ENCODE measurements at regions of chr12 and their contacts with region 1.

Region 1: GRCh38 chr12:121697098-121697698 is 15.4 kb upstream of the TMEM120B start:
- DNase-seq: no peak
- ATAC-seq: peak in 3 of 4 donors; percentile 19 to 54 (median 30)
- H3K4me3 ChIP-seq: no peak overlapping the region
- H3K27ac ChIP-seq: no peak overlapping the region
- H3K4me1 ChIP-seq: peaks cover 8% of the 10 kb centered on the region
- H3K27me3 ChIP-seq: no peaks in the 10 kb centered on the region
- CTCF ChIP-seq: peak; percentile 70

Region 2: DNA sequence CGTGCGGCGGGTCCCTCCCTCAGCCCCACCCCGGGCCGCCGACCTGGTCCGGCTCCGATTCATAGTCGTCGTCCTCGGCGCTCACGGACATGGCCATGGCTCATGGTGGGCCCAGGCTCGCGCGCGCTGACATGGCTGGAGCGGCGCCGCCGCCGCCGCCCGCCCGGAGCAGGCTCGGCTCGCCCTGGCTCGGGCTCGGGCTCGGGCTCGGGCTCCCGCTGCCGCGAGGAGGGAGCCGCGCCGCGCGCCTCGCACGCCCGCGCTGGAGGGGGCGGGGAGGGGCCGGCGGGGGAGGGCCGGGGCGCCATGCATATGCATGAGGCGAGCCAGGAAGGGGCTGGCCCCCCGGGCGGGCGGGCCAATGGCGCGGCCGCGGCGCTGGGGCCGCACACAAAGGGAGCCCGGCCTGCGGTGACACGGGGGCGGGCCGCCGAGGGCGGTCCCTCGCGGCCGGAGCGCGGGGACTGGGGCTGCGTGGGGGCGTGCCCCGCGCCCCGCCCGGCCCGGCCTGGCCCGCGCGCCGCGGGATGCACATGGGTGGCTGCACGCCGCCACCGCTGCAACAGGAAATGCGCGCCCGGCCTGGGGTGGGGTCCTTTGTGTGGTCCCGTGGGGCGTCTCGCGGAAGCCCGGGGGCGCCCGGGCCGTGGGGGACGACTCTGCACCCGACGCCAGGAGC is 229.9 kb before region 1 on chr12:
- intact Hi-C with region 1: no loop called
- DNase-seq: peak; percentile 92 to 95
- ATAC-seq: peak; percentile 96 to 97 (median 96)
- H3K4me3 ChIP-seq: peak overlapping the region; percentile 76
- H3K27ac ChIP-seq: peak overlapping the region; percentile 85
- H3K4me1 ChIP-seq: peaks cover 11% of the 10 kb centered on the region
- H3K27me3 ChIP-seq: no peaks in the 10 kb centered on the region
- CTCF ChIP-seq: no peak

Region 3: DNA sequence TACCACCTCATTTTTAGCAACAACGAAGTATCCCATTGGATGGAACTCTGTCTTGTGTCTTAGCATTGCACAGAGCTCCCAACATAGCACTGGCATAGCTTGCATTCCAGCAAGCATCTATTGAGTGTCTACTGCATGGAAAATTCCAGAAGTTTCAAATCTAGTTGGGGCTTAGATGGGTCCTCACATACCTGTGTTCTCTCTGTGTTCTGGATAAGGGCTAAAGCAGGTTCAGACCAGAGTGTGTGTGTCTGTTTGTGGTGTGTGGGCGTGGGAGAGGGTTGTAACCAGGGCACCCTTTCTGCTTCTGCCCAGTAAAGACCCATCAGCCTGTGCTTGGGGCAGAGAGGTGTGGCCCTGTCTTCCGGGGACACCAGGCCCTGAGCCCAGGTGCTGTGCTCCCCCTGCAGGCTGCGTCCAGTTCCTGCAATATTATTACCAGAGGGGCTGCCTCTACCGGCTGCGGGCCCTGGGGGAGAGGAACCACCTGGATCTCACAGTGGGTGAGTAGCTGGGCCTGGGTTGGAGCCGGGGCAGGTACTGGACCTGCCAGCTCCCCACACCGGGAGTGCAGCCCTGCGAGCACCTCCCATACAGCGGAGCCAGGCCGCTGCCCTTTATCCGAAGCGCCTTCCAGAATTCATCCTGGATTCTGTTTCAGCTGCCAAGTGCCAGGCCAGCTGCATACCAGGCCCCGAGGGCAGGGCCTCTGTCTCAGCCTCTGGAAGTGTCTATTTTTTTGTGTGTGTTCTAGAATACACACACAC is 76.0 kb after region 1 on chr12:
- intact Hi-C with region 1: loop called (anchors 2 kb)
- DNase-seq: peak; percentile 71 to 87
- ATAC-seq: peak; percentile 78 to 91 (median 87)
- H3K4me3 ChIP-seq: no peak overlapping the region
- H3K27ac ChIP-seq: peak overlapping the region; percentile 37
- H3K4me1 ChIP-seq: peaks cover 18% of the 10 kb centered on the region
- H3K27me3 ChIP-seq: no peaks in the 10 kb centered on the region
- CTCF ChIP-seq: peak; percentile 87

Region 4: GRCh38 chr12:121793838-121794533 is 96.8 kb after region 1 on chr12:
- intact Hi-C with region 1: loop called (anchors 2 to 5 kb)
- DNase-seq: peak; percentile 91 to 96
- ATAC-seq: peak; percentile 61 to 72 (median 64)
- H3K4me3 ChIP-seq: peak overlapping the region; percentile 86
- H3K27ac ChIP-seq: peak overlapping the region; percentile 100
- H3K4me1 ChIP-seq: peaks cover 50% of the 10 kb centered on the region
- H3K27me3 ChIP-seq: no peaks in the 10 kb centered on the region
- CTCF ChIP-seq: peak; percentile 99

Region 5: GRCh38 chr12:121883315-121883660 is 186.1 kb after region 1 on chr12:
- intact Hi-C with region 1: loop called (anchors 5 to 10 kb)
- DNase-seq: no peak
- ATAC-seq: peak in 1 of 4 donors; percentile 33
- H3K4me3 ChIP-seq: no peak overlapping the region
- H3K27ac ChIP-seq: no peak overlapping the region
- H3K4me1 ChIP-seq: no peaks in the 10 kb centered on the region
- H3K27me3 ChIP-seq: no peaks in the 10 kb centered on the region
- CTCF ChIP-seq: no peak